WTC11 (cell line): ENCODE measurements at regions of chr15 and their contacts with region 1.

Region 1: GRCh38 chr15:33700695-33701304 is 267.5 kb upstream of the CHRM5 start:
- DNase-seq: peak; percentile 87
- ATAC-seq: peak; percentile 90
- H3K4me3 Mint-ChIP-seq: no peak overlapping the region
- H3K27ac Mint-ChIP-seq: no peak overlapping the region
- H3K4me1 Mint-ChIP-seq: peaks cover 23% of the 10 kb centered on the region
- H3K27me3 Mint-ChIP-seq: no peaks in the 10 kb centered on the region
- CTCF ChIP-seq: peak; percentile 89

Region 2: DNA sequence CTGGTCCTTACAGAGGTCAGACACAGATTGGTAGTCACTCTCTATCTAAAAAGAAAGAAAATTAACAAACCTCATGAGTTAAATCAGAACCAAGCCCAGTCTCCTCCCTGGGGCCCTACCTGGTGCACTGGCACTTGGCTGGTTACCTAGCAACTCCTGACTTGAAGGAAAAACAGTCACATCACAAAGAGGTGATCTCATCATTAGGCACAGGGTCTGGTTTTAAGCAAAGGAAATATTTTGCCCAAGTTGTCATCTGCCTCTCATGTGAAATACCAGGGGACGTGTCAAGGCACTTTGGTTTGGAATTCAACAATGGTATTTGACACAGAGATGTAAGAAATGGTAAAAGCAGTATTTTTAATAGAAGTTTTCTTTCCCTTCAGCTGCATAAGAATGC is 458.6 kb before region 1 on chr15:
- CTCF ChIA-PET with region 1: interaction called, 11 read pairs
- POLR2A ChIA-PET with region 1: no interaction called
- DNase-seq: no peak
- ATAC-seq: peak; percentile 78
- H3K4me3 Mint-ChIP-seq: no peak overlapping the region
- H3K27ac Mint-ChIP-seq: peak overlapping the region; percentile 43; the same call in 1 of the 2 replicates
- H3K4me1 Mint-ChIP-seq: peaks cover 29% of the 10 kb centered on the region
- H3K27me3 Mint-ChIP-seq: no peaks in the 10 kb centered on the region; the same call in 1 of the 2 replicates
- CTCF ChIP-seq: no peak

Region 3: GRCh38 chr15:33298631-33299030 is 402.2 kb before region 1 on chr15:
- CTCF ChIA-PET with region 1: interaction called, 131 read pairs
- POLR2A ChIA-PET with region 1: no interaction called
- DNase-seq: no peak
- ATAC-seq: no peak
- H3K4me3 Mint-ChIP-seq: no peak overlapping the region
- H3K27ac Mint-ChIP-seq: no peak overlapping the region
- H3K4me1 Mint-ChIP-seq: peaks cover under 1% of the 10 kb centered on the region; the same call in 1 of the 2 replicates
- H3K27me3 Mint-ChIP-seq: no peaks in the 10 kb centered on the region; the same call in 1 of the 2 replicates
- CTCF ChIP-seq: no peak

Region 4: GRCh38 chr15:33492434-33493052 is 208.3 kb before region 1 on chr15:
- CTCF ChIA-PET with region 1: interaction called, 12 read pairs
- POLR2A ChIA-PET with region 1: no interaction called
- DNase-seq: no peak
- ATAC-seq: peak; percentile 65
- H3K4me3 Mint-ChIP-seq: no peak overlapping the region
- H3K27ac Mint-ChIP-seq: no peak overlapping the region
- H3K4me1 Mint-ChIP-seq: peaks cover 9% of the 10 kb centered on the region; the same call in 1 of the 2 replicates
- H3K27me3 Mint-ChIP-seq: no peaks in the 10 kb centered on the region
- CTCF ChIP-seq: no peak

Region 5: DNA sequence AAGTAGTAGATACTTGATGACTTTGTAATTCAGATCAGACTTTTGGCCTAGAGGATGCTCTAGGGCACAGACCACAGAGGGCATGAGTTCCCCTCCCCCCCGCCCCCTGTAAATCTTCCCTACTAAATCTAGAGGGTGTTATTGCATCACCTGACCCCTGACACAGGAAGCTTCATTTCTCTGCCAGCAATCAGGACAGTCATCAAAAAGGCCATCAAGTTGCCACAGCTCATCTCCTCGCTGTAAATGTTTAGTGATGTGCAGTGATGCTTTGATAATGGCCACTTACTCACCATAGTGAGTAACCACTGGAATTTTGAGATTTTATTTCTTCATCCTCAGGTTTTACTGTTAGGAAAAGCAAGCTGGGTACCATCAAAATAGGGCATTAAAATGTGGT is 21.7 kb before region 1 on chr15:
- CTCF ChIA-PET with region 1: interaction called, 10 read pairs
- POLR2A ChIA-PET with region 1: no interaction called
- DNase-seq: no peak
- ATAC-seq: no peak
- H3K4me3 Mint-ChIP-seq: no peak overlapping the region
- H3K27ac Mint-ChIP-seq: no peak overlapping the region
- H3K4me1 Mint-ChIP-seq: peaks cover 21% of the 10 kb centered on the region
- H3K27me3 Mint-ChIP-seq: no peaks in the 10 kb centered on the region; the same call in 1 of the 2 replicates
- CTCF ChIP-seq: no peak

Region 6: DNA sequence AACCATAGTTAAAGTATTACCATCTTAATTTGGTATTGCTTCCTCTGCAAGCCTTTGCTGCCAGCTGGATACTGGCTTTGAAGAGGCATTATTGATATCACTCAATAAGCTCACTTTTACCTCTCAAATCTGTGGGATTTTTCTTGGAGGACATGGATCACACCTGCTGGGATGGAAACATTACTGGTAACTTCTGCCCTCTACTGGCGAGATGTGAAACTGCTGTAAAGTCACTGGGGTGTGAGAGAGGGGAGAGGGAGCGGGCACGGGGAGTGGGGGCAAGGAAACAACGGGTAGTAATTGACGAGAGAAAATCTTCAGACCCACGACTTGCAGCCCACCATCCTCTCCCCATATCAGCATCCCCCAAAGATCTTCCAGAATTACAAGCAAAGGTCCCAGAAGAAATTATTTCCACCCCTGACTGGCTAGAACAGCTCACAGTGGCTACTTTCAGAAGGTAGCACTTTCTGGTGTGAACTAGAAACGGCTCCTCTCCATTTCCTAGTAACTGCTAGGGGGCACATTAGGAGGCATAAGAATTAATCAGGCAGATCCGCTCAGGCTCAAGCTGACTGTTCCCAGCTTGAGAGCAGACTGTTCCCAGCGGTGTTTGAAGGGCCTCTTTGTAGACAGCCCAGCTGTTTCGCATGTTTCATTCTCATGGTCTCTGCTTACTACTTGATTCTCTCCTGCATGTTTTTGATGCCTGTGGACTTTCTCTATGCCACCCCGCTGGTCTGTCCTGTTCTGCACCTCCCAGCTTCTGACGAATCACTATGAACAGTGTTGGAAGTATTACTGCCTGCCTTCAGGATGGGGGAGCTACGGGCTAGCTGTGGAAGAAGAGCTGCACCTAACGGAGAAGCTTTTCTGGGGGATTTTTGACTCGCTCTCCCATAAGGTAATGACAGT is 37.1 kb after region 1 on chr15:
- CTCF ChIA-PET with region 1: interaction called, 62 read pairs
- POLR2A ChIA-PET with region 1: no interaction called
- DNase-seq: peak; percentile 78
- ATAC-seq: peak; percentile 86
- H3K4me3 Mint-ChIP-seq: peak overlapping the region; percentile 71
- H3K27ac Mint-ChIP-seq: peak overlapping the region; percentile 31; the same call in 1 of the 2 replicates
- H3K4me1 Mint-ChIP-seq: peaks cover 13% of the 10 kb centered on the region
- H3K27me3 Mint-ChIP-seq: no peaks in the 10 kb centered on the region; the same call in 1 of the 2 replicates
- CTCF ChIP-seq: peak; percentile 68

Region 7: GRCh38 chr15:33872416-33873106 is 171.8 kb after region 1 on chr15:
- CTCF ChIA-PET with region 1: no interaction called
- POLR2A ChIA-PET with region 1: no interaction called
- DNase-seq: no peak
- ATAC-seq: peak; percentile 46; the same call in 1 of the 2 replicates
- H3K4me3 Mint-ChIP-seq: no peak overlapping the region
- H3K27ac Mint-ChIP-seq: no peak overlapping the region
- H3K4me1 Mint-ChIP-seq: peaks cover 14% of the 10 kb centered on the region
- H3K27me3 Mint-ChIP-seq: no peaks in the 10 kb centered on the region
- CTCF ChIP-seq: no peak

Region 8: DNA sequence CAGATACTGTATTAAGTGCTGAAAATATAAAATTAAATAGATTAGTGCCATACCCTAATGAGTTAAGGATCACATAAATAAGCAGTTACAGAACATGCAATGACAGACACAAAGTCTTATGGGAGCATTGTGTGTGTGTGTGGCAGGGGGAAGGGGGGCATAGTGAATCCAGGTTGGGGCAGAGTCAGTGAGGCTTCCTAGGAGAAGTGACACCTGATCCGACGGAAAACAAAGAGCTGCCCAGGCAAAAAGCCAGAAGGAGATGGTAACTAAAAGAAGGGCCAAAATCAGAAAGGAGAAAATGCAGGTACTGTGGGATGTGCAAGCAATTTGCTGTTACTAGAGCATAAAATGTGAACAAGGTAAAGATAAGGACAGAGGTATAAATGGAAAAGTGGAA is 187.4 kb after region 1 on chr15:
- CTCF ChIA-PET with region 1: no interaction called
- POLR2A ChIA-PET with region 1: no interaction called
- DNase-seq: no peak
- ATAC-seq: no peak; the same call in 1 of the 2 replicates
- H3K4me3 Mint-ChIP-seq: no peak overlapping the region
- H3K27ac Mint-ChIP-seq: peak overlapping the region; percentile 87; the same call in 1 of the 2 replicates
- H3K4me1 Mint-ChIP-seq: peaks cover 4% of the 10 kb centered on the region
- H3K27me3 Mint-ChIP-seq: no peaks in the 10 kb centered on the region
- CTCF ChIP-seq: no peak